ENCODE measurements at regions of chr16 and their contacts with region 1.

Region 1: DNA sequence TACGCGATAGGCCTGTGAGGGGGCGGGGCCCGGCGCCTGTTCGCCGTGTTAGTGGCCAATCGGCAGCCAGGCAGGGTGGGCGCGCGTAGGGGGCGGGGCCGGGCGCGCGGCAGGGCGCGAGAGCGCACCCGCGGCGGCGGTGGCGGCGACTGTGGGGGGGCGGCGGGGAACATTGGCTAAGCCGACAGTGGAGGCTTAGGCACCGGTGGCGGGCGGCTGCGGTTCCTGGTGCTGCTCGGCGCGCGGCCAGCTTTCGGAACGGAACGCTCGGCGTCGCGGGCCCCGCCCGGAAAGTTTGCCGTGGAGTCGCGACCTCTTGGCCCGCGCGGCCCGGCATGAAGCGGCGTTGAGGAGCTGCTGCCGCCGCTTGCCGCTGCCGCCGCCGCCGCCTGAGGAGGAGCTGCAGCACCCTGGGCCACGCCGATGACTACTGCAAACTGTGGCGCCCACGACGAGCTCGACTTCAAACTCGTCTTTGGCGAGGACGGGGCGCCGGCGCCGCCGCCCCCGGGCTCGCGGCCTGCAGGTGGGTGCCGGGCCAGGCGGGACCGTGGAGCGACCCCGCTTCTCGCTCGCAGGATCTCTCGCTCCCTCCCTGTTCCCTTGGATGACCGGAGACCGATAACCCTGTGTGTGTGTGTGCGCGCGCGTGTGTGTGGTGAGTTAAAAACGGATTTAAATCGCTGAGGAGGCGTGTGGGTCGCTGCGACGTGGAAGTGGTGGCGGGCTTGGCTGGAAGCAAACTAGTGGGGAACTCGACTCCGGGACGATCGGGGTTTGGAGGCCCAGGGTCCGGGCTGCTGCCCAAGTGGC is at the start of gene NFATC3:
- DNase-seq: peak; percentile 89 to 96
- H3K4me3 ChIP-seq: peak within 1 kb of the TSS; percentile 91
- H3K27ac ChIP-seq: peak within 1 kb of the TSS; percentile 51
- H3K4me1 ChIP-seq: peaks cover 14% of the 10 kb centered on the region
- H3K27me3 ChIP-seq: no peaks in the 10 kb centered on the region
- CTCF ChIP-seq: no peak
- total RNA-seq, gene NFATC3: 37.2 and 43.7 TPM in 2 replicates

Region 2: GRCh38 chr16:67959520-67959919 is 125.9 kb before region 1 on chr16:
- CTCF ChIA-PET with region 1: no interaction called
- POLR2A ChIA-PET with region 1: interaction called, 10 read pairs
- intact Hi-C with region 1: no loop called
- DNase-seq: no peak
- H3K4me3 ChIP-seq: no peak overlapping the region
- H3K27ac ChIP-seq: no peak overlapping the region
- H3K4me1 ChIP-seq: no peaks in the 10 kb centered on the region
- H3K27me3 ChIP-seq: no peaks in the 10 kb centered on the region
- CTCF ChIP-seq: no peak

Region 3: DNA sequence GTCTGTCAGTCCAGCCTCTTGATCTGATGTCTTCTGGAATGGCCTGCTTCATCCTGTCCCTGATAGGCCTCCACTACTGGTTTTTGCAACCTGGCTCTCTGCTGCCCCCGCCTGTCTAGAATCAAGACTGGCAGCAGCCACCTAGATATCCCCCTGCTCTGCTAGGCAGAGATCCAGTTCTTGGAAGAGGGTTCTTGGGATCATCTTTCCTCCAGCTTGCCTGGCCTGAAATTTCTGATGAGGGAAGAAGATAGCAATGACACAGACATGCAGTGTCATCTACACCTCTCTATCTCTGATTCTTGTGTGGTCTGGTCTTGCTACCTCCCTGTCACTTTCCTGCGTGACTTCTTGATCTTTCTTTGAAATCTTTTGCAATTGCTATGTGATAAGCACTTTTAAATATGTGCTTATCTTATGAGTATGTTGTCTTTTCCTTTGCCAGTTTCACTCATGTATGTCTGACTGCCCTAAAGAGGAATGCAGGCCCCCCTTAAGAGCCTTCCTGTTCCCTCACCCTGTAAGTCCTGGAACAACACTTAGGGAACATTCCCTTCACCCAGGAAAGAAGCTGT is 20.6 kb before region 1 on chr16:
- CTCF ChIA-PET with region 1: interaction called, 10 read pairs
- POLR2A ChIA-PET with region 1: no interaction called
- intact Hi-C with region 1: no loop called
- DNase-seq: peak in 1 of 2 experiments; percentile 60
- H3K4me3 ChIP-seq: no peak overlapping the region
- H3K27ac ChIP-seq: no peak overlapping the region
- H3K4me1 ChIP-seq: no peaks in the 10 kb centered on the region
- H3K27me3 ChIP-seq: no peaks in the 10 kb centered on the region
- CTCF ChIP-seq: peak; percentile 84

Region 4: GRCh38 chr16:68116256-68116867 is 30.9 kb after region 1 on chr16:
- CTCF ChIA-PET with region 1: no interaction called
- POLR2A ChIA-PET with region 1: no interaction called
- intact Hi-C with region 1: no loop called
- DNase-seq: no peak
- H3K4me3 ChIP-seq: no peak overlapping the region
- H3K27ac ChIP-seq: no peak overlapping the region
- H3K4me1 ChIP-seq: no peaks in the 10 kb centered on the region
- H3K27me3 ChIP-seq: no peaks in the 10 kb centered on the region
- CTCF ChIP-seq: peak; percentile 56; the same call in 1 of the 2 replicates

Region 5: GRCh38 chr16:68146585-68146984 is 61.1 kb after region 1 on chr16:
- CTCF ChIA-PET with region 1: no interaction called
- POLR2A ChIA-PET with region 1: interaction called, 14 read pairs
- intact Hi-C with region 1: loop called (anchors 10 kb)
- DNase-seq: no peak
- H3K4me3 ChIP-seq: no peak overlapping the region
- H3K27ac ChIP-seq: 0 out of 2 replicates have a peak overlapping the region, but pooled peaks have one; percentile 37
- H3K4me1 ChIP-seq: peaks cover 31% of the 10 kb centered on the region
- H3K27me3 ChIP-seq: no peaks in the 10 kb centered on the region
- CTCF ChIP-seq: no peak